Adrenal gland (tissue), 19 donors: ENCODE measurements at regions of chr20 and their contacts with region 1.

Region 1: DNA sequence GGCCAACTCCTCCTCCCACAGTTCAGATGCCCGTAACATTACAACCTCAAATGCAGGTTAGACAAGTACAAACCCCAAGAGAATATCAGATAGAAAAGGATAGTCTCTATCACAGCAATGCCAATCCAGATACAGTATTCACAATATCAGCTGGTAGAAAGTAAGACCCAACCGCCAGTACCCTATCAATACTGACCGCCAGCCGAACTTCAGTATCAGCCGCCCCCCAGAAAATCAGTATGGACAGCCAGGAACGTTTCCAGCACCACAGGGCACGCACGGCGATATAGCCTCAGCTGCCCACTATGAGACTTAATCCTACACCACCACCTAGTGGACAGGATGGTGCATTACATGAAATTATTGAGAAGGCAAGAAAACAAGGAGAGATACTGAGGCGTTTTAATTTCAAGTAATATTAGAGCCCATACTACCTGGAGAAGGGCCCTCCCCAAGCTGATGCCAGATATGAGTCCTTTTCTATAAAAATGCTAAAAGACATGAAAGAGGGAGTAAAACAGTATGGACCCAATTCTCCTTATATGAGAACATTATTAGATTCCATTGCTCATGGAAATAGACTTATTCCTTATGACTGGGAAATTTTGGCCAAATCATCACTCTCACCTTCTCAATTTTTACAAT is 17.6 kb upstream of the EIF2S2 start:
- DNase-seq: peak; percentile 55 to 76 (median 58)
- H3K4me3 ChIP-seq: no peak overlapping the region
- H3K27ac ChIP-seq: no peak overlapping the region
- H3K4me1 ChIP-seq: no peaks in the 10 kb centered on the region
- H3K27me3 ChIP-seq: no peaks in the 10 kb centered on the region
- CTCF ChIP-seq: peak; percentile 84 to 91 (median 88)
- POLR2A ChIP-seq: no peak

Region 2: DNA sequence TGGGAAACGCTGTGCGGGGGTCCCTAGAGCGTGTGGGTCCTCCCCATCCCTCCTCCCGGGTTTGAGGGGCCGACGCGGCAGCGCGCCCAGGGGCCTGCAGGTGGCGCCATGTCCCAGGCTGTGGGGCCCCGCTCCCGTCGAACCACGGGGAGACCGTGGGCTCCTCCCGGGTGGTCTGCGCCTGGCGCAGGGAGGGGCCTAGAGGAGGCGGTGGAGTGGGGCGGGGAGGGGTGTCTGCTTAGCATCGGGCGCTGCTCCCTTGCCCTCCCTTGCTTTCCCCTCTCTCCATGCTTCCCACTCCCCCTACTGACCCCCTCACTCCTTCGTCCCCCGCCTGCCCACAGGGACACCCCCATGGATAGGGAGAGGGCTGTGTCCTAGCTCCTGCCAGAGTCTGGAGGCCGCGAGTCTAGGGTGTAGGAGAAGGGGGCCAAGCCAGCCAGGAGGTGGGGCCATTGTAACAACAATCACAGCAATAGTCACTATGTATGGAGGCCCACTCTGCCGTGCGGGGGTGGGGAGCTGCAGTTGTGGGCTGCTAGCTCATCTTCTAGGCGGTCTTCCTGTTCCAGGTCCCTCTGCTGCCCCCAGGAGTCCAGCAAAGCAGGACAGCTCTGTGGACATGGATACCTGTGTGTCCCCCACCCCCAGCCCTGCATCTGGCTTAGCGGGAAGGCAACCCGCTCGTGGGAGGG is 266.8 kb before region 1 on chr20:
- intact Hi-C with region 1: loop called in 1 of 2 experiments (anchors 10 kb)
- DNase-seq: peak; percentile 22 to 67 (median 39)
- H3K4me3 ChIP-seq: no peak overlapping the region
- H3K27ac ChIP-seq: no peak overlapping the region
- H3K4me1 ChIP-seq: peaks cover 0 to 6% of the 10 kb centered on the region in 2 donors
- H3K27me3 ChIP-seq: no peaks in the 10 kb centered on the region
- CTCF ChIP-seq: peak in 5 of 6 experiments; percentile 46 to 68 (median 57)
- POLR2A ChIP-seq: no peak

Region 3: GRCh38 chr20:33933469-33933909 is 196.2 kb before region 1 on chr20:
- intact Hi-C with region 1: loop called in 1 of 2 experiments (anchors 5 kb)
- DNase-seq: peak; percentile 59 to 89 (median 83)
- H3K4me3 ChIP-seq: no peak overlapping the region
- H3K27ac ChIP-seq: peak overlapping the region in 2 of 5 donors; percentile 32 to 48
- H3K4me1 ChIP-seq: no peaks in the 10 kb centered on the region
- H3K27me3 ChIP-seq: no peaks in the 10 kb centered on the region
- CTCF ChIP-seq: peak; percentile 26 to 77 (median 68)
- POLR2A ChIP-seq: no peak

Region 4: GRCh38 chr20:34024723-34025351 is 104.8 kb before region 1 on chr20:
- intact Hi-C with region 1: no loop called
- DNase-seq: peak in 5 of 7 donors; percentile 25 to 55 (median 33)
- H3K4me3 ChIP-seq: no peak overlapping the region
- H3K27ac ChIP-seq: peak overlapping the region in 1 of 5 donors; percentile 13
- H3K4me1 ChIP-seq: peaks cover 18 to 36% of the 10 kb centered on the region in 2 donors
- H3K27me3 ChIP-seq: no peaks in the 10 kb centered on the region
- CTCF ChIP-seq: no peak
- POLR2A ChIP-seq: no peak

Region 5: DNA sequence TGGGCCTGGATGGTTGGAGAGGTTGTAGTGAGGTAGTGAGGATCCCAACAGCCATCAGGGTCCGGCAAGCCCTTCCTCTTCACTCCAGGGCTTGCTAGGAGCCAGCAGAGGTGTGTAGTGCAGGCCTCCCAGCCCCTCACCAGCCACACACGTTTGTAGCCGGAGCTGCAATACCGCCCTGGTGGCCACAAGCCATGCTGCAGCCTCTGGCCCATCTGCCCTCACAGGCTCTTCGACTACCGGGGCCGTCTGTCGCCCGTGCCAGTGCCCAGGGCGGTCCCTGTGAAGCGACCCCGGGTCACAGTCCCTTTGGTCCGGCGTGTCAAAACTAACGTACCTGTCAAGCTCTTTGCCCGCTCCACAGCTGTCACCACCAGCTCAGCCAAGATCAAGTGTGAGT is 54.0 kb before region 1 on chr20:
- intact Hi-C with region 1: loop called in 1 of 2 experiments (anchors 5 kb)
- DNase-seq: peak in 1 of 7 donors; percentile 42
- H3K4me3 ChIP-seq: no peak overlapping the region
- H3K27ac ChIP-seq: no peak overlapping the region
- H3K4me1 ChIP-seq: no peaks in the 10 kb centered on the region
- H3K27me3 ChIP-seq: no peaks in the 10 kb centered on the region
- CTCF ChIP-seq: no peak
- POLR2A ChIP-seq: no peak